ENCODE measurements at regions of chr11 and their contacts with region 1.

Region 1: GRCh38 chr11:121318848-121319834 is 26.6 kb downstream of the SC5D start:
- DNase-seq: peak; percentile 57
- H3K4me3 Mint-ChIP-seq: no peak overlapping the region
- H3K27ac Mint-ChIP-seq: no peak overlapping the region
- H3K4me1 Mint-ChIP-seq: peaks cover 6% of the 10 kb centered on the region
- H3K27me3 Mint-ChIP-seq: peaks cover 18% of the 10 kb centered on the region
- CTCF ChIP-seq: peak; percentile 68

Region 2: GRCh38 chr11:120977266-120978137 is 341.6 kb before region 1 on chr11:
- CTCF ChIA-PET with region 1: no interaction called
- POLR2A ChIA-PET with region 1: no interaction called
- intact Hi-C with region 1: no loop called
- DNase-seq: peak; percentile 30
- H3K4me3 Mint-ChIP-seq: no peak overlapping the region
- H3K27ac Mint-ChIP-seq: no peak overlapping the region
- H3K4me1 Mint-ChIP-seq: no peaks in the 10 kb centered on the region
- H3K27me3 Mint-ChIP-seq: peaks cover 94% of the 10 kb centered on the region
- CTCF ChIP-seq: no peak

Region 3: GRCh38 chr11:121334973-121335710 is 16.0 kb after region 1 on chr11:
- CTCF ChIA-PET with region 1: interaction called, 11 read pairs
- POLR2A ChIA-PET with region 1: no interaction called
- intact Hi-C with region 1: no loop called
- DNase-seq: no peak
- H3K4me3 Mint-ChIP-seq: no peak overlapping the region
- H3K27ac Mint-ChIP-seq: no peak overlapping the region
- H3K4me1 Mint-ChIP-seq: no peaks in the 10 kb centered on the region
- H3K27me3 Mint-ChIP-seq: peaks cover 37% of the 10 kb centered on the region
- CTCF ChIP-seq: no peak

Region 4: GRCh38 chr11:121578251-121578976 is 259.3 kb after region 1 on chr11:
- CTCF ChIA-PET with region 1: interaction called, 14 read pairs
- POLR2A ChIA-PET with region 1: interaction called, 3 read pairs
- intact Hi-C with region 1: no loop called
- DNase-seq: no peak
- H3K4me3 Mint-ChIP-seq: no peak overlapping the region
- H3K27ac Mint-ChIP-seq: no peak overlapping the region
- H3K4me1 Mint-ChIP-seq: peaks cover 7% of the 10 kb centered on the region
- H3K27me3 Mint-ChIP-seq: no peaks in the 10 kb centered on the region
- CTCF ChIP-seq: no peak

Region 5: DNA sequence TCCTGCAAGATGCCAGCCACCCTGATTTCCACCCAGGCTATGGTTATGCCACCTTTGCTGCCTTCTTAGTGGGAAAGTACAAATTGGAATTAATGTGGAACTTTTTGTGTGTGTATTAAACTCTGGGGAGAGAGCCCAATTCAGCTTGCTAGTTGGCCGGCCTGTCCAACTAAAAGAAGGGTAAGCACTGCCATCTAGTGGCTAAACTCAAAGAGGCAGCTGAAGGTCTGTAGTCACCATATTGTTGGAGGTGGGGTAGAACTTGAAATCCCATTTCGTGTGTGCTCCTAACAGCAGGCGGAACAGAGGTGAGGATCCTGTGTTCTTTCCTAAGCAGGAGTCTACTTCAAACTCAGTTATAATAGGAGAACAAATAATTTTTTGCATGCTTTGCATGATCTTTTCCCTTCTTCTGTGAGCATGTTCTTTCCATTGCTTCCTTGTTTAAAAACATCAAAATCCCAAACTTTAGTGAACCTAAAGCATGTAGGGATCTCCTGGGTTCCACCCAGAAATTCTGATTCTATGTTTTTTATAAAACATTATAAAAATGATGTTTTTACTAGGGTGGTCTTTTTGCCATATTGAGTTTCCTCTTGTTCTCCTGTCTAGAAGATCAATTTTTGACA is 272.4 kb after region 1 on chr11:
- CTCF ChIA-PET with region 1: interaction called, 67 read pairs
- POLR2A ChIA-PET with region 1: interaction called, 3 read pairs
- intact Hi-C with region 1: loop called (anchors 1 kb)
- DNase-seq: peak; percentile 80
- H3K4me3 Mint-ChIP-seq: no peak overlapping the region
- H3K27ac Mint-ChIP-seq: no peak overlapping the region
- H3K4me1 Mint-ChIP-seq: peaks cover 24% of the 10 kb centered on the region
- H3K27me3 Mint-ChIP-seq: no peaks in the 10 kb centered on the region
- CTCF ChIP-seq: peak; percentile 86

Measured in MCF 10A (cell line).